GM12878 (cell line): ENCODE measurements at regions of chr10 and their contacts with region 1.

Region 1: GRCh38 chr10:125982260-125982948 is 86.0 kb downstream of the FANK1 start:
- DNase-seq: peak; percentile 35
- ATAC-seq: peak; percentile 94
- H3K4me3 ChIP-seq: no peak overlapping the region
- H3K27ac ChIP-seq: no peak overlapping the region
- H3K4me1 ChIP-seq: no peaks in the 10 kb centered on the region
- H3K27me3 ChIP-seq: no peaks in the 10 kb centered on the region; a peak in 1 of 4 replicates
- CTCF ChIP-seq: peak; percentile 38 to 62 (median 57); a peak in 5 of 6 replicates
- EP300 ChIP-seq: no peak
- POLR2A ChIP-seq: no peak
- RAD21 ChIP-seq: peak; percentile 78

Region 2: GRCh38 chr10:126097558-126098225 is 115.3 kb after region 1 on chr10:
- CTCF ChIA-PET with region 1: interaction called, 6 read pairs
- POLR2A ChIA-PET with region 1: no interaction called
- RAD21 ChIA-PET with region 1: no interaction called
- SMC1A ChIA-PET with region 1: interaction called, 4 read pairs
- in situ Hi-C with region 1: no loop called
- intact Hi-C with region 1: loop called (anchors 5 kb)
- DNase-seq: no peak
- ATAC-seq: no peak
- H3K4me3 ChIP-seq: no peak overlapping the region
- H3K27ac ChIP-seq: no peak overlapping the region
- H3K4me1 ChIP-seq: no peaks in the 10 kb centered on the region
- H3K27me3 ChIP-seq: no peaks in the 10 kb centered on the region
- CTCF ChIP-seq: peak in 2 of 3 experiments; percentile 12 to 21; a peak in 3 of 6 replicates
- EP300 ChIP-seq: no peak
- POLR2A ChIP-seq: no peak
- RAD21 ChIP-seq: no peak

Region 3: DNA sequence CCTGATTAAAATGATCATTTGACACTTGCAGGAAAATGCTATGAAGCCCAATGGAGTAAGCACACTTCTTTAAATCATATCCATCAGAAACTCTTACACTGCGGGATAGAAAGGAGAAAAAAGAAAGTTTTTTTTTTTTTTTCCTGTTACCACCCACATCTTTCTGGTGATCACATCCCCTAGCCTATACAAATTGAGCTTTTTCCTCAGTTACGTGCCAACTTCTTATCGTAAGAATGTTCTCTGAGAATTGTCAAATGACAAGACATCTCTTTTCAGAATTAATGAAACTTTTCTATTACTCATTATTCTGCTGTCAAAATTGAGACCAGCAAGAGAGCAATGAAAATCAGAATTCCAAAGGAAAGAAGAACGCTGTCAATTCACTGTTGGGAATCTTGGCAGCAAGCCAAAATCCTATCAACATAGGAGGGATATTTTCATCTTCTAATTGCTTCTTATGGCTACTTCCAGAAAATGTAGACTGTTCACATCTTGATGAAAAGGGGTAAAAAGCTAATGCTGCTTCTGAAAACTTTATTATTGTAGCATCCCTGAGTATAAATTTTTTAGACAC is 226.4 kb after region 1 on chr10:
- CTCF ChIA-PET with region 1: no interaction called
- POLR2A ChIA-PET with region 1: no interaction called
- RAD21 ChIA-PET with region 1: no interaction called
- SMC1A ChIA-PET with region 1: no interaction called
- in situ Hi-C with region 1: no loop called
- intact Hi-C with region 1: no loop called
- DNase-seq: no peak
- ATAC-seq: no peak
- H3K4me3 ChIP-seq: no peak overlapping the region
- H3K27ac ChIP-seq: no peak overlapping the region
- H3K4me1 ChIP-seq: no peaks in the 10 kb centered on the region
- H3K27me3 ChIP-seq: no peaks in the 10 kb centered on the region
- CTCF ChIP-seq: no peak
- EP300 ChIP-seq: no peak
- POLR2A ChIP-seq: no peak
- RAD21 ChIP-seq: no peak

Region 4: DNA sequence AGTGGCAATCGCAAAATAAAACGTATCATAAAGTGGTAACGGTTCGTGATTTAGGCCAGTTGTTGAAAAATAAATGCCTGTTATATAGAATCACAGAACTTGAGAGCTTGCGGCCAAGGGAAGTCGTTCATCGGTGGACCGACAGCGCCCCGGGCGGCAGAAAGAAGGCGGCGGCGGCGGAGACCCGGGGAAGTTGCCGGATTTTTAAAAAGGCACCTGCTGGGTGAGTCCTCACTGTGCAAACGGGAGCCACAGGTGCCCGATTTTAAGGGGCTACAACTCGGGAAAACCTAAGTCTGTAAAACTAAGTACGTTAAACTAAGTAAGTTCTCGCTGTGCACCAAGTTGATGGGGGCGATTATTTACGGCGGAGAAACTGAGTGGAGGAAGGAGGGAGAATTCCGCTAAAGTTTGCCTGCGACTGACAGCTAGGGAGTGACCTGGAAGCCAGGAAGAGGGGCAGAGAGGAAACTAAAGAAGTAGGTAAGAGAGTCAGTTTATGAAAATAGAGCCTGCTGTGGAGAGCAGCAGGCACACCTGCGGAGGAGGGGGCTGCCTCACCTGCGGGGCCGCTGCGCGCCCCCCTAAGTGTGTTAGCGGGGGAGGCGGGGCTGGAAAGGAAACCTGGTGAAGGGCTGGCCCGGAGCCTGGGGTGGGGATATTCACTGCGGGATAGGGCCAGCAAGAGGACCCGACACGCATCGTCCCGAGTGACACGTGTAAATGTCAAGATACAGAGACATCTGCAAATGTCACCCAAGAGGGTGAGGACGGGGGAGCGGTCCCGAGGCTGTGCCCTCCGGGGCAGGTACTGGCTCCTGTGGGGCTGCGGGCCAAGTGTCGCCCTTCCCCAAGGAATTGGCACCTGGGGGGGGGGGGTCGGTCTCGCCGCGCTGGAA is 404.9 kb after region 1 on chr10:
- CTCF ChIA-PET with region 1: no interaction called
- POLR2A ChIA-PET with region 1: no interaction called
- RAD21 ChIA-PET with region 1: no interaction called
- SMC1A ChIA-PET with region 1: no interaction called
- in situ Hi-C with region 1: no loop called
- intact Hi-C with region 1: loop called (anchors 1 kb)
- DNase-seq: no peak
- ATAC-seq: no peak
- H3K4me3 ChIP-seq: no peak overlapping the region
- H3K27ac ChIP-seq: no peak overlapping the region
- H3K4me1 ChIP-seq: no peaks in the 10 kb centered on the region
- H3K27me3 ChIP-seq: no peaks in the 10 kb centered on the region
- CTCF ChIP-seq: peak in 2 of 3 experiments; percentile 17 to 19; a peak in 1 of 6 replicates
- EP300 ChIP-seq: no peak
- POLR2A ChIP-seq: no peak
- RAD21 ChIP-seq: 0 out of 2 replicates have a peak, but pooled peaks have one; percentile 6

Region 5: DNA sequence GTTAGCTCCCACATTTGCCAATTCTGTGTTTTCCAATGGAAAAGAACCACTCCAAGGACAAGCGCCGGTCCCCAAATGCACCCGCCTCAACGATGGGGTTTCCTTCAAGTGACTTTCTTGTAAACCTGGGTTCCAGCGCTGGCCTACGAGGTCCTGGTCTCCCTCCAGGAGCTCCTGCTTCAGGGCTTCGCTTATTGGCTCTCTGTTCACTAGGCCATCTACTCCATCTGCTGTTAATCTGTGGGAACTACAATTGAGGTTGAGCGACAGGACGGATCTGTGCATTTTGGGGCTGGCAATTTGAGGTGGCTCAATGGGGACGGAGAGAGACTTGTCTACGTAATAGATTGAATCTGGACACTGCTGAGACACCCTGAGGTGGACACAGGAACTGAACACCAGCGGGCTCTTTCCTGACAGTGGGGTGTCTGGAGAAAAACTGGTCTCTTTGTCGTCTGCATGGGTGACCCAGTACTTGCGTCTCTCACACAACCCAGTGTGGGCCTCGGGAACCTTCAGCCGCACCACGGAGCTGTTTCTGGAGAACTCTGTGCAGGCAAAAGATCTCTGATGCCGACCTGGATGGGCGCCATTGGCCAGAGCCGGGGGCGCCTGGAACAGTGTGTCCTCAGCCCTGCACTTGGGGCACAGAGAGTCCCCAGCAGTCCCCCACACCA is 521.8 kb after region 1 on chr10:
- CTCF ChIA-PET with region 1: interaction called, 18 read pairs
- POLR2A ChIA-PET with region 1: no interaction called
- RAD21 ChIA-PET with region 1: interaction called, 9 read pairs
- SMC1A ChIA-PET with region 1: interaction called, 13 read pairs
- in situ Hi-C with region 1: loop called (anchors 5 kb)
- intact Hi-C with region 1: loop called (anchors 1 kb)
- DNase-seq: no peak
- ATAC-seq: no peak
- H3K4me3 ChIP-seq: no peak overlapping the region
- H3K27ac ChIP-seq: no peak overlapping the region
- H3K4me1 ChIP-seq: no peaks in the 10 kb centered on the region
- H3K27me3 ChIP-seq: no peaks in the 10 kb centered on the region
- CTCF ChIP-seq: peak; percentile 10 to 48 (median 43); a peak in 5 of 6 replicates
- EP300 ChIP-seq: no peak
- POLR2A ChIP-seq: no peak
- RAD21 ChIP-seq: peak; percentile 62

Region 6: DNA sequence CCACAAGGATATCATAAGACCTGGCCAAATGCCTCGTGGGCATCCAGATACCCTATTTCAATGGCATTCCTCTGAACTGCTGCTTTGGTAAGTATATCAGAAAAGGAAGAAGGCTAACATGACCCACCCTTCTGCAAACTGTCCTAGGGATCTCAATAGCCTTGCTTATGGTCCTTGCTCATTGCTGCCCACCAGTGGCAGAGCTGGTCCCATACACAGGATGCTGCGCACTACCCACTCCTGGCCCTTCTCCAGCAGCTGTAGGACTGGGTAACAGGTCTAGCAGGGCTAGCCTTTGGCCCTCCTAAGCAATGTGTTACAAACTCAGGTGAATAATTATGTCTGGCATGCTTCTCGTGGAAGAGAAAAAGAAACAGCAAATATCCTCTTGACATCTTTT is 615.6 kb after region 1 on chr10:
- CTCF ChIA-PET with region 1: interaction called, 12 read pairs
- POLR2A ChIA-PET with region 1: no interaction called
- RAD21 ChIA-PET with region 1: no interaction called
- SMC1A ChIA-PET with region 1: interaction called, 3 read pairs
- in situ Hi-C with region 1: no loop called
- intact Hi-C with region 1: loop called (anchors 5 kb)
- DNase-seq: no peak
- ATAC-seq: peak; percentile 36; the same call in 1 of the 3 replicates
- H3K4me3 ChIP-seq: no peak overlapping the region
- H3K27ac ChIP-seq: no peak overlapping the region
- H3K4me1 ChIP-seq: no peaks in the 10 kb centered on the region
- H3K27me3 ChIP-seq: no peaks in the 10 kb centered on the region
- CTCF ChIP-seq: peak; percentile 37 to 60 (median 45); a peak in 4 of 6 replicates
- EP300 ChIP-seq: no peak
- POLR2A ChIP-seq: no peak
- RAD21 ChIP-seq: peak; percentile 33; the same call in 1 of the 2 replicates

Region 7: DNA sequence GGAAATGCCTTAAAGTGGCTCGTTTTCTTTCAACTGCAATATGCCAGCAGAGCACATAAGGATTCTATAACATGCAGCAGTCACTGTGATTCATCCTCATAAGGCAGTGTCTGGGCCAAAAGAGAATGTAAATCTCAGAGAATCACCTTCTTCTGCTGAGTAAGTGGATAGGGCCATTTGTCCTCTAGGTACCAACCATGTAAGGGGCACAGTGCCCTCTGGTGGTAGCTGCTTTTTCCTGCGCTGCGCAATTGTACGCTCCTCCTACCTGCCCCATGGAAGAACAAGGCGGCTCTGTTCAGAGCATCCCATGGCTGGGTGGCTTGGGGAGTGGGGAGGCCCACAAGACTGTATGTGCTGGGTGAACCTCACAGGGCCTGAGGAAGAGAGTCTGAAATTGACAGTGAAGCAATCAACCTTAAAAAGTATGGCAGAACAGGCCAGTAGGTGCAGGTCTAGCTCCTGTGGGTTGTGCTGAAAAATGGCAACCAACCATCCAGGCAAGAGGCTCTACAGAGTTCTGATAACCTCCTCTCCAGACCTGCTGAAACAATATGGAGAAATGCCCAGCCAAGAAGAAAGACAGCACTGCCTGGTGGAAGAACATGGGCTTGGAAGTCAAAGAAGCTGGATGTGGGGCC is 766.7 kb after region 1 on chr10:
- CTCF ChIA-PET with region 1: interaction called, 3 read pairs
- POLR2A ChIA-PET with region 1: no interaction called
- RAD21 ChIA-PET with region 1: no interaction called
- SMC1A ChIA-PET with region 1: interaction called, 4 read pairs
- in situ Hi-C with region 1: no loop called
- intact Hi-C with region 1: loop called (anchors 1 kb)
- DNase-seq: no peak
- ATAC-seq: peak; percentile 75
- H3K4me3 ChIP-seq: no peak overlapping the region
- H3K27ac ChIP-seq: no peak overlapping the region
- H3K4me1 ChIP-seq: no peaks in the 10 kb centered on the region
- H3K27me3 ChIP-seq: no peaks in the 10 kb centered on the region
- CTCF ChIP-seq: peak; percentile 33 to 56 (median 53); a peak in 4 of 6 replicates
- EP300 ChIP-seq: no peak
- POLR2A ChIP-seq: no peak
- RAD21 ChIP-seq: peak; percentile 39

Region 8: GRCh38 chr10:127492607-127493250 is 1510.3 kb after region 1 on chr10:
- CTCF ChIA-PET with region 1: no interaction called
- POLR2A ChIA-PET with region 1: no interaction called
- RAD21 ChIA-PET with region 1: no interaction called
- SMC1A ChIA-PET with region 1: no interaction called
- in situ Hi-C with region 1: no loop called
- intact Hi-C with region 1: no loop called
- DNase-seq: no peak
- ATAC-seq: no peak
- H3K4me3 ChIP-seq: no peak overlapping the region
- H3K27ac ChIP-seq: no peak overlapping the region
- H3K4me1 ChIP-seq: no peaks in the 10 kb centered on the region
- H3K27me3 ChIP-seq: no peaks in the 10 kb centered on the region
- CTCF ChIP-seq: 0 out of 6 replicates have a peak, but pooled peaks of 1 of the 3 experiments have one; percentile 4
- EP300 ChIP-seq: no peak
- POLR2A ChIP-seq: no peak
- RAD21 ChIP-seq: no peak

Region 9: GRCh38 chr10:127853868-127854768 is 1871.7 kb after region 1 on chr10:
- CTCF ChIA-PET with region 1: no interaction called
- POLR2A ChIA-PET with region 1: no interaction called
- RAD21 ChIA-PET with region 1: no interaction called
- SMC1A ChIA-PET with region 1: no interaction called
- in situ Hi-C with region 1: loop called (anchors 5 kb)
- intact Hi-C with region 1: loop called (anchors 2 kb)
- DNase-seq: no peak
- ATAC-seq: peak; percentile 95
- H3K4me3 ChIP-seq: no peak overlapping the region
- H3K27ac ChIP-seq: no peak overlapping the region
- H3K4me1 ChIP-seq: peaks cover 14% of the 10 kb centered on the region
- H3K27me3 ChIP-seq: no peaks in the 10 kb centered on the region
- CTCF ChIP-seq: peak; percentile 78 to 83 (median 80)
- EP300 ChIP-seq: no peak
- POLR2A ChIP-seq: no peak
- RAD21 ChIP-seq: peak; percentile 82